ENCODE measurements at regions of chr4 and their contacts with region 1.

Region 1: GRCh38 chr4:70687821-70688794 is at the start of gene UTP3:
- DNase-seq: peak; percentile 92 to 95
- H3K4me3 ChIP-seq: peak within 1 kb of the TSS; percentile 79 to 99 (median 91)
- H3K27ac ChIP-seq: peak within 1 kb of the TSS; percentile 86
- H3K4me1 ChIP-seq: peaks cover 0 to 2% (median 0%) of the 10 kb centered on the region in 4 experiments; a peak in 2 of 7 replicates
- H3K27me3 ChIP-seq: no peaks in the 10 kb centered on the region
- CTCF ChIP-seq: peak; percentile 77 to 97 (median 93)
- EP300 ChIP-seq: no peak
- POLR2A ChIP-seq: peak in 1 of 2 experiments; percentile 85; a peak in 2 of 3 replicates
- RAD21 ChIP-seq: peak; percentile 44 to 55
- total RNA-seq, gene UTP3: 50.6 and 51.3 TPM in 2 replicates

Region 2: DNA sequence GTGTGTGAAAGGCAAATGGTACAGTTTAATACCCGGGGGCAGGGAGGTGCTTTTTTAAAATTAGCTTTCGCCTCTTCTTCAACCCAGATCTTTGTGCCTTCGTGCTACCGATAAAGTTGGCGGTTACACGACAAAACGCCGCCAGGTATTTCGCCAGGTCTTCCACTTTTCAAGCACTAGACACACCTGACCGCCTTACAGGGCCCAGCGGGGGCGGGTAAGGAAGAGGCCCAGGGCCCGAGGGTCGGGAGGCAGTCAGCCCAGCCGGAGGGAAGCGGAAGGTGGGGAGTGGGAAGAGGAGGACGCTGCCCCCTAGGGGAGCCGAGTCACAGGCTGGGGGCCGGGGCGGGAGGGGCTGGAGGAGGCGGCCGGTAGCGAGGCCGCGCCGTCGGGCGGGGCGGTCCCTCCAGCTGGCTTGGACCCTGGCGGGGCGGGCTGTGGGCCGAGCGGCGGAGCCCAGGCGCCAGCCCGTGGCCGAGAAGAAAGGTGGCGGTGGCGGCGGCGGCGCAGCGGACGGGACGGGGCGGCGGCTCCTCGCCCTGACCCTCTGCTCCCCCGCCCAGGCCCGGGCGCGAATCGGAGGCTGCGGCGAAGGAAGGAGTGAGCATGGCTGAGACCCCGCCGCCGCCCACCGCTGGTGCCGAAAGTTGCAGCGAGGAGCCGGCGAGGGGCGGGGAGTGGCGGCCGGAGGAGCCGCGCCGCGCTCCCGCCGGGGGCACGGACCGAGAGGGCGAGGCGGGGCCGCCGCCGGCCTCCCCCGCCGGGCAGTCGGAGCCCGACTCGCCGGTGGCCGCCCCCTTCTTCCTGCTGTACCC is 16.4 kb after region 1 on chr4:
- CTCF ChIA-PET with region 1: interaction called, 36 read pairs
- POLR2A ChIA-PET with region 1: interaction called, 86 read pairs
- DNase-seq: peak in 1 of 2 experiments; percentile 84
- H3K4me3 ChIP-seq: peak overlapping the region; percentile 51 to 71 (median 68)
- H3K27ac ChIP-seq: no peak overlapping the region; the same call in 1 of the 2 replicates
- H3K4me1 ChIP-seq: peaks cover 0 to 9% (median 4%) of the 10 kb centered on the region in 4 experiments; a peak in 5 of 7 replicates
- H3K27me3 ChIP-seq: no peaks in the 10 kb centered on the region; a peak in 1 of 7 replicates
- CTCF ChIP-seq: peak; percentile 29 to 46 (median 37)
- EP300 ChIP-seq: no peak
- POLR2A ChIP-seq: peak in 1 of 2 experiments; percentile 64; a peak in 2 of 3 replicates
- RAD21 ChIP-seq: peak in 1 of 2 experiments; percentile 25; a peak in 2 of 4 replicates

Region 3: DNA sequence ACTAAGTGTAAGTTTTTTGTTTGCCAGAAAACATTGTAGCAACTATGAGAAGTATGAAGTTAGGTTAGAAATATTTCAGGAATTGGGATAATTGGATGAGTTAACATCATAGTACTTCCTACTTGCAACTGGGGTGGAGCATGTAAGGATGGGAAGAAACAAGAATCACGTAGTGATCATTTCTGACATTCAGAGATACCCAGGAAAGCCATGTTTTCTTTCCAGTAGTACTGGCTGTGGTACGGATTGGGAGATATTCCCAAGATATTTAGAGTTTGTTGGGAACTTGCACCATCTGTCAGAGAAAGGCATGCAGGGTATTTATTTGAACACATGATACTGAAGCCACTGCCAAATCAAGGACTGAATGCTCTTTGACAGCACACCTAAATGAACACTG is 563.2 kb after region 1 on chr4:
- CTCF ChIA-PET with region 1: no interaction called
- POLR2A ChIA-PET with region 1: no interaction called
- DNase-seq: no peak
- H3K4me3 ChIP-seq: no peak overlapping the region
- H3K27ac ChIP-seq: no peak overlapping the region
- H3K4me1 ChIP-seq: no peaks in the 10 kb centered on the region
- H3K27me3 ChIP-seq: no peaks in the 10 kb centered on the region
- CTCF ChIP-seq: no peak
- EP300 ChIP-seq: no peak
- POLR2A ChIP-seq: no peak
- RAD21 ChIP-seq: no peak

Measured in H1 (cell line).